GM12878 (cell line): ENCODE measurements at regions of chr9 and their contacts with region 1.

Region 1: DNA sequence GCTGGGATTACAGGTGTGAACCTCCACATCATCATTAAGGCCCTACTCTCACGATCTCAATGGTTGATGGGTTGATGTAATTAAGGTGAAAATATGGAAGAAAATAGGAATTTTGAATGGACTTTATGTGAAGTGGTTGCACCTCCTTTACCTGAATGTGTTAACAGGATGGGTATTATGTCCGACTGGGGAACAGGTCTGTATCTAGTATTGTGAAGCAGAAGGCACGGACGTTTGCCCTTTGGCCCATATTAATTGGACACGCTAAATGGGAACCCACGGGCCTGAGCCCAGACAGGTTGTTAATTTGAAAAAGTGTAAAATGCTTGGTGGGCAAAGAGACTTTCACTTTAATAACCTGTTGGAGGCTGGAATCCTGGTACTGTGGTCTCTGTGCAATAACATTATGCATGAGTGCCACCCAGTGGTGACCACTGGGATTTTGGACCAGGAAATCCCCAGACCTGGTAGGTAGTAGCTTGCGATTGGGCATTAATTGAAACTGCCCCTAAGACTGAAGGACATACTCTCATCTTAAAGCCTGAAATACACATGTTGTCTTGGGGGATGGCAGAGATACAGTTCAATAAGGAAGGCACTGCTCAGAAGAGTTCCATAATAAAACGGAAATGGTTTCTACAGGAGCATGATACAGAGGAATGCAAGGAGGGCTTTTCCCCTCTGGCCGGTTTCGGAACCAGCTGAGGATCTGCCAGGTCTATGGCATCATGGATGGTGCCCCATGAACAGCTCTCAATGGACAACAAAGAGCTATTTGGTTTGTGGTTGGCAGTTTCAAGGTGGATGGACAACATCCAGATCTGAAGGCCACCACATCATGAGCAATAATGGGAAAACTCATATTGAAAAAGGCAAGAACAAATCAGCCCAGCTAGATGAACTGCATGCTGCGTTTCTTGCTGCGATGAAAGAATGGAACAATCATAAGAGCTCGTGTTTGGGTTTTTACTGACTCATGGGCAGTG is 26.2 kb upstream of the BICD2 start:
- DNase-seq: peak; percentile 49
- ATAC-seq: peak; percentile 95
- H3K4me3 ChIP-seq: no peak overlapping the region
- H3K27ac ChIP-seq: no peak overlapping the region
- H3K4me1 ChIP-seq: peaks cover 6% of the 10 kb centered on the region; the same call in 1 of the 2 replicates
- H3K27me3 ChIP-seq: peaks cover 3 to 5% of the 10 kb centered on the region in 2 experiments
- CTCF ChIP-seq: peak; percentile 72 to 93 (median 85)
- EP300 ChIP-seq: no peak
- POLR2A ChIP-seq: no peak
- RAD21 ChIP-seq: peak; percentile 95

Region 2: DNA sequence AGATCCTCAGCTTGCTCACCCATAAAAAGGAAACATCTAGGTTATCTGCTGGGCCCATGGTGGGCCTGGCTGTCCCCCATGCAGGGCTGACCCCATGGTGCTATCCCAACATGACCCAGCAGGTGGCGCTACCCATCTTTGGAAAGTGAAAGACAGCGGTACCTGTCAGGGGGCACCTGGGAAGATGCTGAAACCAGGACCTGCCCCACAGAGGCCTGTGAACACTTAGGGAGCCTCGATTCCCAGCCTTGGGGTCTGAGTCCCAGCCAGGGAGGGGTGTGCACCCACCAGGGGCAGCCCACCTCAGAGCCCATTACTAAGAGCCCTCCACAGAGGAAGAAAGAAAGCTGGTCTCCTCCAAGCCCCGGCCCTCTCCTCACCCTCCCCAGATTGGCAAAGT is 74.3 kb before region 1 on chr9:
- CTCF ChIA-PET with region 1: interaction called, 156 read pairs
- POLR2A ChIA-PET with region 1: no interaction called
- RAD21 ChIA-PET with region 1: interaction called, 32 read pairs
- SMC1A ChIA-PET with region 1: interaction called, 31 read pairs
- in situ Hi-C with region 1: loop called (anchors 5 kb)
- intact Hi-C with region 1: loop called (anchors 1 kb)
- DNase-seq: no peak
- ATAC-seq: peak; percentile 90
- H3K4me3 ChIP-seq: no peak overlapping the region
- H3K27ac ChIP-seq: peak overlapping the region; percentile 58
- H3K4me1 ChIP-seq: peaks cover 46% of the 10 kb centered on the region
- H3K27me3 ChIP-seq: no peaks in the 10 kb centered on the region
- CTCF ChIP-seq: peak; percentile 85 to 93 (median 92)
- EP300 ChIP-seq: no peak
- POLR2A ChIP-seq: no peak
- RAD21 ChIP-seq: peak; percentile 92

Region 3: GRCh38 chr9:92728831-92729734 is 61.8 kb before region 1 on chr9:
- CTCF ChIA-PET with region 1: interaction called, 20 read pairs
- POLR2A ChIA-PET with region 1: no interaction called
- RAD21 ChIA-PET with region 1: interaction called, 3 read pairs
- SMC1A ChIA-PET with region 1: interaction called, 4 read pairs
- in situ Hi-C with region 1: no loop called
- intact Hi-C with region 1: no loop called
- DNase-seq: no peak
- ATAC-seq: peak; percentile 85
- H3K4me3 ChIP-seq: peak overlapping the region; percentile 33; the same call in 1 of the 2 replicates
- H3K27ac ChIP-seq: 0 out of 2 replicates have a peak overlapping the region, but pooled peaks have one; percentile 32
- H3K4me1 ChIP-seq: peaks cover 35% of the 10 kb centered on the region
- H3K27me3 ChIP-seq: no peaks in the 10 kb centered on the region
- CTCF ChIP-seq: peak; percentile 43 to 58 (median 55); a peak in 5 of 6 replicates
- EP300 ChIP-seq: no peak
- POLR2A ChIP-seq: peak; percentile 31; the same call in 1 of the 2 replicates
- RAD21 ChIP-seq: peak; percentile 48

Region 4: GRCh38 chr9:92760070-92760469 is 30.8 kb before region 1 on chr9:
- CTCF ChIA-PET with region 1: interaction called, 11 read pairs
- POLR2A ChIA-PET with region 1: no interaction called
- RAD21 ChIA-PET with region 1: interaction called, 3 read pairs
- SMC1A ChIA-PET with region 1: interaction called, 4 read pairs
- in situ Hi-C with region 1: no loop called
- intact Hi-C with region 1: no loop called
- DNase-seq: no peak
- ATAC-seq: no peak
- H3K4me3 ChIP-seq: no peak overlapping the region
- H3K27ac ChIP-seq: no peak overlapping the region
- H3K4me1 ChIP-seq: peaks cover 16% of the 10 kb centered on the region
- H3K27me3 ChIP-seq: no peaks in the 10 kb centered on the region
- CTCF ChIP-seq: no peak
- EP300 ChIP-seq: no peak
- POLR2A ChIP-seq: no peak
- RAD21 ChIP-seq: no peak

Region 5: DNA sequence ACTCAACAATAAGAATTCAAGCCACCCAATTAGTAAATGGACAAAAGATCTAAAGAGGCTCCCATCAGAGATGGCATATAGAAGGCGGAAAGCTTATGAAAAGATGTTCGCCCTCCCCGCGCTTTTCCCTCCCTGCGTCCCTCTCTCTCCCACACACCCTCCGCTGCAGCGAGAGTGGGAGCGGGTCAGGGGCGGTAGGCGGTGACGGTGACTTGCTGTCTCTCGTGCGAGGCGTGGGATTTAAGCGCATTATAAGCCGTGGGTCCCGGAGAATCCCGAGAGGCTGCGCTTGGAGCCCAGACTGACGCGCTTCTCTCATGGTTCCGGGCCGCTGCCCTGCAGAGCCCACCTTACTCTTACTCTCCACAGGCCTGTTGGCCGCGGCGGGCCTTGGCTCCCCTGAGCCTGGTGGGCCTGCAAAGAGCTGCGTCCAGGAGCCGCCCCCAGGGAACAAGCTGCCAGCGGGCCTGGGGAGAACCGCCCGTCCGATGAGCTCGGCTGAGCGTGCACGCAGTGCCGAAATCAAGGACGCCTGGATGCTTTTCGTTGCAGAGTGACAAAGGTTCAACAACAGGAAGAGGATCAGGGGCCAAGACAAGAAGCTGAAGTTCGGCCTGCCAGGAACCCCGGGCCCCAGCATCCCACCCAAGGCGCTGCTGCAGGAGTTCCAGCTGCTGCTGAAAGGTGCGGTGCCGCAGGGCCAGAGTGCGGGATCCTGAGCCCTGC is 16.4 kb after region 1 on chr9:
- CTCF ChIA-PET with region 1: interaction called, 10 read pairs
- POLR2A ChIA-PET with region 1: no interaction called
- RAD21 ChIA-PET with region 1: no interaction called
- SMC1A ChIA-PET with region 1: no interaction called
- in situ Hi-C with region 1: no loop called
- intact Hi-C with region 1: no loop called
- DNase-seq: no peak
- ATAC-seq: no peak
- H3K4me3 ChIP-seq: no peak overlapping the region
- H3K27ac ChIP-seq: no peak overlapping the region
- H3K4me1 ChIP-seq: no peaks in the 10 kb centered on the region
- H3K27me3 ChIP-seq: peaks cover 14 to 18% of the 10 kb centered on the region in 2 experiments
- CTCF ChIP-seq: no peak
- EP300 ChIP-seq: no peak
- POLR2A ChIP-seq: no peak
- RAD21 ChIP-seq: no peak